ENCODE measurements at regions of chr3 and their contacts with region 1.

Region 1: DNA sequence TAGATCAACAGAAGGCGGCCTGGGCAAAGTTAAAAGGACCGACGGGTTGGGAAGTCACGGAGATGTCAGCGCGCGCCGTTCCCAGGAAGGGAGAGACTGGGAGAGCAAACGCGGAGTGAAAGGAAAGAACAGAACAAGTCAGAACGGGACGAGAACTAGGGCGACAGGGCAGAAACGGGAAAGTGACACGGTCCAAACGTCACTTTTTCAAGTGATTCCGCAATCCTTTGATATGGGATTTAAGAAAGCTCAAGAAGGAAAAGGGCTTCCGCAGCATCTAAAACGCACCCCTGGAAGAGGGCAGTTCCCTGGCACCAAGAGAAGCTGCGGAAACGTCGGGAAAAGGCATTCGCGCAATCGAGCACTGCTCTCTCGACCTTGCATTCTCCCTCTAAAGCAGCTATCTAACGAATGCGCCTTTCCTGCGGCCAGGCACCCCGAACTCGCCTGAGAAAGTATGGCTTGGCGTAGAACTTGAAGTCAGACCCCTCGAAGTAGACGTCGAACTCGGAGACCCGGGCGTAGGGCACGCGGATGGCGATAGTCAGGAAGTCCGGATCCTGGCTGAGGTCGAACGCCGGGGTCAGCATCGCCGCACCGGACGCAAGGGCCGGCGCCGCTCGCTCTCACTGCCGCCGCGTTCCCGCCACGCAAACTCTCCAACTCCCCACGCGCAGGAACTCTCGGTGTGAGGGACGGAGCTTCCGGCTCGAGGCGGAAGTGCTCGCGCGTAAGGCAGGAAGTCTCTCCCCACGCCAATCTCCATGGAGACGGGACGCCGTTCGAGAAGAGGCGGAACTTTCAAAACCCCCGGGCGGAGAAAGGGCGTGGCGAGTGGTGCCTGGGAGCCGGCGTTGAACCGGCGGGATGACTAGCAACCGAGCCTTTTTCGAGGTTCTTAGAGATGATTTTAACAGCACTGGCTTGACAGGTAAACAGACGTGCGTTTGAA is at the start of gene SHQ1:
- DNase-seq: peak; percentile 98
- ATAC-seq: peak; percentile 93
- H3K4me3 ChIP-seq: peak within 1 kb of the TSS; percentile 93
- H3K27ac ChIP-seq: peak within 1 kb of the TSS; percentile 18; the same call in 1 of the 2 replicates
- H3K4me1 ChIP-seq: peaks cover 28% of the 10 kb centered on the region
- H3K27me3 ChIP-seq: no peaks in the 10 kb centered on the region
- CTCF ChIP-seq: no peak
- total RNA-seq, gene SHQ1: 16.6 and 19.6 TPM in 2 replicates

Region 2: GRCh38 chr3:71875461-71875947 is 972.5 kb before region 1 on chr3:
- CTCF ChIA-PET with region 1: interaction called, 16 read pairs
- POLR2A ChIA-PET with region 1: no interaction called
- intact Hi-C with region 1: no loop called
- DNase-seq: peak; percentile 83
- ATAC-seq: peak; percentile 99
- H3K4me3 ChIP-seq: no peak overlapping the region
- H3K27ac ChIP-seq: no peak overlapping the region
- H3K4me1 ChIP-seq: no peaks in the 10 kb centered on the region
- H3K27me3 ChIP-seq: peaks cover 39% of the 10 kb centered on the region
- CTCF ChIP-seq: peak; percentile 92

Region 3: DNA sequence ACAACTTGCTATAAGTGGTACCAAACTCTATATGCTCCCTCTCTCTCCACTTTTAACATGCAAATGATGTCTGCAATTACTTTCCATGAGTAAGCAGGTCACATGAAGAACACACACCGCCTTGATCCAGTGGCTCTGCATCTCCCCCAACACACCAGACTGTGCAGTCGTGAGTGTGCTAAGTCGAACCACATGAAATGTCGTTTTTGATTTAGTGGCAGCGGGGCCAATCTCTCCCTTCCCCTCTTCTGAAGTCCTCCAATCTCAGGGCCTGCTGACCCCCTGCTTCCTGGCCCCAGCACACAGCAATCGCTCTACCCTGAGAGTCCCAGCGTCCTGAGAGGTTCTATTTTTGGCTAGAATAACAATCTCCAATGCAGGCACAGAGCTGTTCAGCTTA is 312.3 kb before region 1 on chr3:
- CTCF ChIA-PET with region 1: no interaction called
- POLR2A ChIA-PET with region 1: no interaction called
- intact Hi-C with region 1: no loop called
- DNase-seq: no peak
- ATAC-seq: no peak
- H3K4me3 ChIP-seq: no peak overlapping the region
- H3K27ac ChIP-seq: no peak overlapping the region
- H3K4me1 ChIP-seq: no peaks in the 10 kb centered on the region
- H3K27me3 ChIP-seq: no peaks in the 10 kb centered on the region
- CTCF ChIP-seq: no peak

Region 4: GRCh38 chr3:72887705-72888545 is 39.9 kb after region 1 on chr3 and contains the start of gene GXYLT2:
- CTCF ChIA-PET with region 1: interaction called, 7 read pairs
- POLR2A ChIA-PET with region 1: no interaction called
- intact Hi-C with region 1: loop called (anchors 1 kb)
- DNase-seq: peak; percentile 58
- ATAC-seq: peak; percentile 84
- H3K4me3 ChIP-seq: peak within 1 kb of the TSS; percentile 76
- H3K27ac ChIP-seq: no peak within 1 kb of the TSS
- H3K4me1 ChIP-seq: peaks cover 45% of the 10 kb centered on the region
- H3K27me3 ChIP-seq: no peaks in the 10 kb centered on the region
- CTCF ChIP-seq: no peak
- total RNA-seq, gene GXYLT2: 12.6 and 13.3 TPM in 2 replicates

Region 5: GRCh38 chr3:72996473-72997333 is 148.7 kb after region 1 on chr3 and contains the start of gene PPP4R2:
- CTCF ChIA-PET with region 1: no interaction called
- POLR2A ChIA-PET with region 1: interaction called, 5 read pairs
- intact Hi-C with region 1: loop called (anchors 5 kb)
- DNase-seq: peak; percentile 93
- ATAC-seq: peak; percentile 82
- H3K4me3 ChIP-seq: peak within 1 kb of the TSS; percentile 85
- H3K27ac ChIP-seq: peak within 1 kb of the TSS; percentile 75
- H3K4me1 ChIP-seq: peaks cover 28% of the 10 kb centered on the region
- H3K27me3 ChIP-seq: no peaks in the 10 kb centered on the region
- CTCF ChIP-seq: no peak
- total RNA-seq, gene PPP4R2: 40.5 and 62.7 TPM in 2 replicates

Region 6: DNA sequence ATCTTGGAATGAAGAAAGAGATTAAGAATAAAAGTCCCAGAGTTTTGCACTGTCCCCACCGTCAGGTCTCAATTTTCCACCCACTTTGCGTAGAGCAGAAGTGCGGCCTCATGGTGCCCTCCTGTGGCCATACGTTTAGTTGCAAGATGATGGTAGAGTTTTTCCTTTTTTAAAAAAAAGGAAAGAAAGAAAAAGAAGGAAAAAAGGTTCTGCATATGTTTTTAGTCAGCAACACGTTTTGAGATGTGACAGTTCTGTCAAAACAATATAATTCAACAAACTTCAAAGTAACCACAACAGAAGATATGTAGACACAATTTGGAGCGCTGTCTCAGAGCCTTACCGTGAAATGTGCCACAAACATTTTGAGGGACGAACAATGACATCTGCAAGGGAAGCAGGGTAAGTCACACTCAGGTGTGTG is 238.1 kb after region 1 on chr3:
- CTCF ChIA-PET with region 1: interaction called, 4 read pairs
- POLR2A ChIA-PET with region 1: no interaction called
- intact Hi-C with region 1: loop called (anchors 1 kb)
- DNase-seq: peak; percentile 68
- ATAC-seq: peak; percentile 79
- H3K4me3 ChIP-seq: no peak overlapping the region
- H3K27ac ChIP-seq: no peak overlapping the region
- H3K4me1 ChIP-seq: no peaks in the 10 kb centered on the region
- H3K27me3 ChIP-seq: no peaks in the 10 kb centered on the region
- CTCF ChIP-seq: peak; percentile 93